ENCODE measurements at regions of chr7 and their contacts with region 1.

Region 1: GRCh38 chr7:18370633-18371032 is 124.9 kb upstream of the HDAC9 start:
- DNase-seq: no peak
- CTCF ChIP-seq: no peak

Region 2: GRCh38 chr7:18357691-18358090 is 12.9 kb before region 1 on chr7:
- CTCF ChIA-PET with region 1: interaction called, 17 read pairs
- POLR2A ChIA-PET with region 1: no interaction called
- DNase-seq: peak; percentile 9
- CTCF ChIP-seq: no peak

Region 3: DNA sequence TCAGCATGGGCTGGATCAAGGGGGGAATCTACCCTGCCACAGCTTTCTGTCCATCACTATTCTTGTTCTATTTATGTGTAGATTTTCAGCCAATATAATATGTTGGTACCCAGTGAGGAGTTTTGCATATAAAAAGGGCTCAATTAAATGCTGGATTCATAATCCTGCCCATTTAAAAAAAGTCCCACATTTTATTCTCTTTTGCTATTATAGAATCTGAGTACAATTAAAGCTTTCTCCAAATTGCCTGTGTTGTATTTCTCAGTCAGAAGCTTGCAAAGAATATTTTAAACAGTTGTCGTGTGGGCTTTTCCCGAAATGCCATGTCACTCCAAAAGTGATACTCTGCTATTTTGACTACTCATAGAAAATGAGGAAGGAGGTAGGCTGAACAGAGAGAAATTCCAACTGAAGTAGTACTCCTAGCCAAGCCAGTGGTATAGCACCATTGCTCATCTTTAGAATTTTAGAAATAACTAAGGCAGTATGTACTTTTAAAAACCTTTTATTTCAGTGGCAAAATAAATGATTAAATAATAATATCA is 16.6 kb after region 1 on chr7:
- CTCF ChIA-PET with region 1: interaction called, 13 read pairs
- POLR2A ChIA-PET with region 1: no interaction called
- DNase-seq: no peak
- CTCF ChIP-seq: no peak